ENCODE measurements at regions of chr11 and their contacts with region 1.

Region 1: GRCh38 chr11:88152381-88152780 is 22.9 kb downstream of the RAB38 start:
- DNase-seq: no peak
- ATAC-seq: no peak
- H3K4me3 ChIP-seq: no peak overlapping the region
- H3K27ac ChIP-seq: no peak overlapping the region
- H3K4me1 ChIP-seq: no peaks in the 10 kb centered on the region
- H3K27me3 ChIP-seq: no peaks in the 10 kb centered on the region
- CTCF ChIP-seq: no peak

Region 2: DNA sequence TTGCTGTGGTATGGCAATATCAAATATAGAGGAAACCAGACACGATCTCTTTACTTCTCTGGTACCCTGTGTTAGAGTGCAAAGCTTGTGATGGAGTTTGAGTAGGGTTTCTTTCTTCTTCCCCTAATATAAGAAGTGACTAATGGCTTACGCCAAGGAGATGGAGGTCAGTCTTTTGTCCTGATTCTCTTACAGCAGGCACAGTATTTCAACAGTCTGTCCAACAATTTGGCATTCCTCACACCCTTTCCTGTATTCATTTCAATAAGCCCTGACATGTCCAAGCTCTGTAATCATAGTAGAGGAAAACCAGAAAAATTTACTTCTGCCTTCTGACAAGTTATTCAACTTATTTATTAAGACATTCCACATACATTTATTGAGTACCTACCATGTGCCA is 568.5 kb before region 1 on chr11:
- intact Hi-C with region 1: loop called in 1 of 10 experiments (anchors 10 kb)
- DNase-seq: no peak
- ATAC-seq: no peak
- H3K4me3 ChIP-seq: no peak overlapping the region
- H3K27ac ChIP-seq: no peak overlapping the region
- H3K4me1 ChIP-seq: no peaks in the 10 kb centered on the region
- H3K27me3 ChIP-seq: no peaks in the 10 kb centered on the region
- CTCF ChIP-seq: no peak

Measured in heart right ventricle (tissue), 16 donors.